ENCODE measurements at regions of chr13 and their contacts with region 1.

Region 1: GRCh38 chr13:39037880-39038568 is at the starts of genes NHLRC3 and PROSER1:
- DNase-seq: peak; percentile 91 to 97 (median 93)
- ATAC-seq: peak; percentile 94 to 99 (median 98)
- H3K4me3 ChIP-seq: peak within 1 kb of the TSS; percentile 66 to 94 (median 81)
- H3K27ac ChIP-seq: peak within 1 kb of the TSS; percentile 66 to 94 (median 84)
- H3K4me1 ChIP-seq: peaks cover 7 to 69% (median 39%) of the 10 kb centered on the region in 12 donors
- H3K27me3 ChIP-seq: no peaks in the 10 kb centered on the region
- CTCF ChIP-seq: peak in 3 of 12 donors; percentile 6 to 15 (median 10)
- POLR2A ChIP-seq: peak in 1 of 2 donors; percentile 44
- total RNA-seq, gene NHLRC3: 3.9 to 19.9 (median 10.6) TPM
- total RNA-seq, gene PROSER1: 10.4 to 22.2 (median 16.2) TPM

Region 2: GRCh38 chr13:38980750-38981078 is 57.3 kb before region 1 on chr13:
- intact Hi-C with region 1: no loop called
- DNase-seq: no peak
- ATAC-seq: no peak
- H3K4me3 ChIP-seq: no peak overlapping the region
- H3K27ac ChIP-seq: no peak overlapping the region
- H3K4me1 ChIP-seq: no peaks in the 10 kb centered on the region
- H3K27me3 ChIP-seq: no peaks in the 10 kb centered on the region
- CTCF ChIP-seq: no peak
- POLR2A ChIP-seq: no peak

Region 3: DNA sequence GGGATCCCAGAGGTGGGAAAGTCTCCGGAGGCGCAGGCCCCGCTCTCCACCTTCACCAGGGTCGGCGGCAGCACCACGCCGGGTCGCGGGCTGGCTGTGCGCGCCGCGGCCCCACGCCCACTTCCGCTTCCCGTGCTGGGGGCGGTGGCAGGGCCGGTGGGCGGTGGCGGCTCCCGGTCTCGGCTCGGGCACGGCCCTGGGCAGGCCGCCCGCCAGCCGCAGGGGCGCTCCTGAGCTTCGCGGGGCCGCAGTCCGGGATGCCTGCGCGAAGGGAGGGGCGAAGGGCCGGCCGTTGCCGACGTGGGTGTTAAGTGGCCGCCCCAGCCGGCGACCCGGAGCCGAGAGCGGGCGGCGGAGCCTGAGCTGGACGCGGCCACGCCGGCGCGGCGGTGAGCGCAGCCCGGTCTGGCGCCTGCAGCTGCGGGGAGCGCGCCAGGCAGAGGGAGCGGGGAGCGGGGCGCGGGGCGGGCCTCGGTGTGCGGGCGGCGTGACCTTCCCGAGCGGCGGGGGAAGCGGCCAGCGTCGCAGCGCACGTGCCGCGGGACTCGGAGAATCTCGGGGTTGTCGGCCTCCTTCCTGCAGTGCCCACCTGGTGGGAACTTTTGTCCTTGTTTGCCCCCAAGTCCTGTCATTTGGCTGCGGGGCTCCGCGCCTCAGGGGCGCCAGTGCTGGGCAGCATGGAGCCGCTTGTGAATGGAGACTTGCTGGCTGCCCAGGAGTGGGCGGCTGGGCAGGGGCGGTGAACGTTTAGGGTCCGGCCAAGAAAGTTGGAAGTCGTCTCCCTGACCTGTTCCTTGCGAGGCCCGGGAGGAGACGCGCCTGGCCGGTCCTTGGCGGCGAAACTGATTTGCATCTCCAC is 1751.5 kb after region 1 on chr13 and contains the start of gene SLC25A15:
- intact Hi-C with region 1: loop called in 2 of 10 experiments (anchors 10 kb)
- DNase-seq: peak; percentile 85 to 91 (median 88)
- ATAC-seq: peak; percentile 87 to 97 (median 94)
- H3K4me3 ChIP-seq: peak within 1 kb of the TSS; percentile 54 to 95 (median 68)
- H3K27ac ChIP-seq: peak within 1 kb of the TSS; percentile 42 to 89 (median 80)
- H3K4me1 ChIP-seq: peaks cover 0 to 15% (median 8%) of the 10 kb centered on the region in 12 donors
- H3K27me3 ChIP-seq: no peaks in the 10 kb centered on the region
- CTCF ChIP-seq: peak in 8 of 12 donors; percentile 9 to 56 (median 43)
- POLR2A ChIP-seq: peak in 1 of 2 donors; percentile 37
- total RNA-seq, gene SLC25A15: 3.7 to 10.4 (median 5.1) TPM

Measured in heart left ventricle (tissue), 16 donors.